Gastrocnemius medialis (tissue), 4 donors: ENCODE measurements at regions of chr12 and their contacts with region 1.

Region 1: DNA sequence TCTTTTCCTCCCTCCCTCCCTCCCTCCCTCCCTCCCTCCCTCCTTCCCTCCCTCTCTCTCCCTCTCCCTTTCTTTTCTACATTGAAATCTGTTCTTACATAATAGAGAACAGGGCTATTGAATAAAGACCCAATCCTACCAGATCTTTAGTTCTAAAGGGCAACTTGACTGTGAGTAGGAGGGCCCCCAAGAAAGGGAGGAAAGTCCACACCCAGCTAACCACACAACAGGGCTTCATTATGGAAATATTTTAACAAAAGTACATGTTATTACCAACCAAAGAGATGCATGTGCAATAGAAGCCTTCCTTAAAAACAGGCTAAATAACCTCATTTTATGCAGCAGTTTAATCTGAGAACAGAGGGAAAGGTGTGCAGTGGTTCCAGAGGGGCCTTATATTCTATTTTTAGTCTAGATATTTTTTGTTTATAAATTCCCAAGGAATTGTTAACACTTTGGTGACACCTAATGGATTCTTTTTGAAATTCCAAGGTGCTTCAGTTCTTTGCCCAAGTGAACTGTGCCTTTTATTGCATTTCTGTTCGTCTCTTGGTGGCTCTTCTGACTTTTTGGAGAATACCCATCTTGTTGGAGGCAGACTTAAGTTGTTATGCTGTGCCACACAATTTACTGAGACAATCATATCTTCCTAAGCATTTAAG is 63.0 kb downstream of the GNS start:
- DNase-seq: no peak
- ATAC-seq: no peak
- H3K4me3 ChIP-seq: no peak overlapping the region
- H3K27ac ChIP-seq: no peak overlapping the region
- H3K4me1 ChIP-seq: peaks cover 4 to 10% of the 10 kb centered on the region in 2 donors
- H3K27me3 ChIP-seq: no peaks in the 10 kb centered on the region
- CTCF ChIP-seq: peak in 3 of 5 experiments; percentile 10 to 36 (median 12)
- POLR2A ChIP-seq: no peak

Region 2: GRCh38 chr12:64544371-64545080 is 151.7 kb before region 1 on chr12:
- in situ Hi-C with region 1: loop called in 3 of 4 experiments (anchors 5 to 10 kb)
- intact Hi-C with region 1: loop called (anchors 1 kb)
- DNase-seq: no peak
- ATAC-seq: no peak
- H3K4me3 ChIP-seq: no peak overlapping the region
- H3K27ac ChIP-seq: no peak overlapping the region
- H3K4me1 ChIP-seq: no peaks in the 10 kb centered on the region
- H3K27me3 ChIP-seq: peaks cover 0 to 2% (median 0%) of the 10 kb centered on the region in 3 donors
- CTCF ChIP-seq: no peak
- POLR2A ChIP-seq: no peak

Region 3: DNA sequence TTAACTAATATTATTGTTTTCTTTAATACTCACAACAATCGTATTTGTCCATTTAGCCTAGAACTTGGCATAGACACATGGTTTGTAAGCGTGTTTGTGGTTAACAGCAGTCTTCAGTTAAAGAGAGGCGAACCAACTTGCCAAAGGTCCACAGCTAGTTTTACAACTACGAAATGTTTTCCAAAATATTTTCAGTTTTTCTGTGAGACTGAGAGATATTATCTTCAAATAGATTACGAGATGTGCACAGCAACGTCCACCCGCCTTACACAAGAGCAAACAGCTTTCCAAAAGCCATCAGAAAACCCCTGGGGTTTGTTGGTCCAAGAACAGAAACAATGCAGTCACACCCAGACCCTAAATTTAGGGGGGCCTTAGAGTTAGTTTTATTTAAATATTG is 144.5 kb before region 1 on chr12:
- in situ Hi-C with region 1: loop called (anchors 5 to 10 kb)
- intact Hi-C with region 1: loop called (anchors 1 kb)
- DNase-seq: no peak
- ATAC-seq: no peak
- H3K4me3 ChIP-seq: no peak overlapping the region
- H3K27ac ChIP-seq: no peak overlapping the region
- H3K4me1 ChIP-seq: peaks cover 0 to 4% of the 10 kb centered on the region in 2 donors
- H3K27me3 ChIP-seq: no peaks in the 10 kb centered on the region
- CTCF ChIP-seq: no peak
- POLR2A ChIP-seq: no peak